PC-9 (cell line): ENCODE measurements at regions of chr1 and their contacts with region 1.

Region 1: DNA sequence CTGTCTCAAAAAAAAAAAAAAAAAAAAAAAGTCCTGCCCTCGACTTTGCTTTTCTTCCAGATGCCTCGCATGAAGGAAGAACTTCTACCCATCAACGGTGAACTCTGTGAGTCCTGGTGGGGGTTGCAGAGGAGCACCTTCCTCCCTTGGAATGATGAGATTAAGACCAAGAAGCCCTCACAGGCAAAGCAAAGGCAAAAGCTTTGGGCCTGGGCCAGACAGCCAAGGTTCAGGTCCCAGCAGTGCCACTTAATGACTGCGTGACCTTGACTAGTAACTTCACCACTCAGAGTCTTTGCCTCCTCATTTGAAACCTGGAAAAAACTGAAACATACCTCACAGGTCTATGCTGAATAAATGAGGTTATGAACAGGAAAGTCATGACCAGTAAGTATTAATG is 55.5 kb downstream of the ZSCAN20 start:
- DNase-seq: no peak
- H3K4me3 ChIP-seq: no peak overlapping the region
- H3K27ac ChIP-seq: no peak overlapping the region
- H3K4me1 ChIP-seq: no peaks in the 10 kb centered on the region
- H3K27me3 ChIP-seq: peaks cover 74% of the 10 kb centered on the region
- CTCF ChIP-seq: no peak

Region 2: DNA sequence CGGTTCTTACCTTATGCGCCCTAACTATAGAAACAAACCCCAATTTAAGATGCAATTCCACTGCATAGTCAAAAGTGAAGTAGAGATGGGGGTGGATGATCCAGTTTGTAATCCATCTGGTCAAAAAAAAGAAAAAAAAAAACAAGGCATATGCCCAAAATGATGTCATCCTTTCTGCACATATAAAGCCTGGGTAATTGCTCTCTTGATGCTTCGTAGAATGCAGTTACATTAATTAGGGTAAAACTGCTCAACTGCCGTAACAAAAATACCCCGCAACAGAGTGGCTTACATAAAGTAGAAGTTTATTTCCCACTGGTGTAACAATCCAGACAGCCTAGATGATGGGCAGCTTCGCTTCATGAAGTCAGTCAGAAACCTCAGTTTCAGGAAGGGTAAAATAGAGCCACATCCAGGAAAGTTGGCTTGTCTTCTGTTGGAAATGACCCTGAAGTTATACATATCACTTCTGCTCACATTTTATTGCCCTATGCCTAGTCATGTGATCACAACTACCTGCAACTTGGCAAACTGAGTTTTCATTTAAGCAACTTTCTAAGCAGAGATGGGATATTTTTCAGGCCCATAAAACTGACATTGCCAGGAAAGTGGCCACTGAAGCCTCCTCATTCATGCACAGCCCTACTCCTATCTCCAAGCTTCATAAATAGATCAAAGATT is 870.4 kb after region 1 on chr1:
- CTCF ChIA-PET with region 1: interaction called, 13 read pairs
- POLR2A ChIA-PET with region 1: no interaction called
- intact Hi-C with region 1: no loop called
- DNase-seq: no peak
- H3K4me3 ChIP-seq: no peak overlapping the region
- H3K27ac ChIP-seq: no peak overlapping the region
- H3K4me1 ChIP-seq: no peaks in the 10 kb centered on the region
- H3K27me3 ChIP-seq: no peaks in the 10 kb centered on the region
- CTCF ChIP-seq: no peak